CD8-positive, alpha-beta memory T cell (primary cell): ENCODE measurements at regions of chr1 and their contacts with region 1.

Region 1: GRCh38 chr1:185156854-185157598 is at the starts of genes SWT1 and TRMT1L:
- DNase-seq: peak; percentile 96 to 98 (median 97)
- H3K4me3 ChIP-seq: peak within 1 kb of the TSS; percentile 90
- H3K4me3 Mint-ChIP-seq: peak within 1 kb of the TSS; percentile 96 to 99 (median 99)
- H3K27ac ChIP-seq: peak within 1 kb of the TSS; percentile 98
- H3K27ac Mint-ChIP-seq: peak within 1 kb of the TSS; percentile 93 to 100 (median 99)
- H3K4me1 ChIP-seq: peaks cover 14% of the 10 kb centered on the region
- H3K4me1 Mint-ChIP-seq: peaks cover 41 to 48% (median 46%) of the 10 kb centered on the region in 3 donors
- H3K27me3 ChIP-seq: no peaks in the 10 kb centered on the region
- H3K27me3 Mint-ChIP-seq: no peaks in the 10 kb centered on the region
- total RNA-seq, gene SWT1: 2.3 to 2.7 TPM
- total RNA-seq, gene TRMT1L: 23.2 to 25.5 TPM

Region 2: GRCh38 chr1:184754476-184755225 is 402.4 kb before region 1 on chr1 and contains the start of gene EDEM3:
- CTCF ChIA-PET with region 1: no interaction called
- POLR2A ChIA-PET with region 1: interaction called, 10 read pairs
- DNase-seq: peak; percentile 95 to 99 (median 98)
- H3K4me3 ChIP-seq: peak within 1 kb of the TSS; percentile 86
- H3K4me3 Mint-ChIP-seq: peak within 1 kb of the TSS; percentile 92 to 97 (median 94)
- H3K27ac ChIP-seq: peak within 1 kb of the TSS; percentile 93
- H3K27ac Mint-ChIP-seq: peak within 1 kb of the TSS; percentile 82 to 98 (median 93)
- H3K4me1 ChIP-seq: peaks cover 18% of the 10 kb centered on the region
- H3K4me1 Mint-ChIP-seq: peaks cover 41 to 52% (median 51%) of the 10 kb centered on the region in 3 donors
- H3K27me3 ChIP-seq: no peaks in the 10 kb centered on the region
- H3K27me3 Mint-ChIP-seq: no peaks in the 10 kb centered on the region
- total RNA-seq, gene EDEM3: 20.1 to 24.9 TPM

Region 3: GRCh38 chr1:185144233-185144632 is 12.8 kb before region 1 on chr1:
- CTCF ChIA-PET with region 1: no interaction called
- POLR2A ChIA-PET with region 1: no interaction called
- DNase-seq: no peak
- H3K4me3 ChIP-seq: no peak overlapping the region
- H3K4me3 Mint-ChIP-seq: no peak overlapping the region
- H3K27ac ChIP-seq: no peak overlapping the region
- H3K27ac Mint-ChIP-seq: no peak overlapping the region
- H3K4me1 ChIP-seq: no peaks in the 10 kb centered on the region
- H3K4me1 Mint-ChIP-seq: peaks cover 2 to 12% (median 6%) of the 10 kb centered on the region in 3 donors
- H3K27me3 ChIP-seq: no peaks in the 10 kb centered on the region
- H3K27me3 Mint-ChIP-seq: no peaks in the 10 kb centered on the region

Region 4: GRCh38 chr1:185170291-185170848 is 13.3 kb after region 1 on chr1:
- CTCF ChIA-PET with region 1: interaction called, 17 read pairs
- POLR2A ChIA-PET with region 1: interaction called, 6 read pairs
- DNase-seq: peak in 3 of 5 donors; percentile 47 to 69 (median 52)
- H3K4me3 ChIP-seq: no peak overlapping the region
- H3K4me3 Mint-ChIP-seq: peak overlapping the region in 2 of 7 donors; percentile 44 to 60
- H3K27ac ChIP-seq: no peak overlapping the region
- H3K27ac Mint-ChIP-seq: peak overlapping the region in 5 of 8 donors; percentile 30 to 91 (median 51)
- H3K4me1 ChIP-seq: no peaks in the 10 kb centered on the region
- H3K4me1 Mint-ChIP-seq: peaks cover 4 to 5% (median 4%) of the 10 kb centered on the region in 3 donors
- H3K27me3 ChIP-seq: no peaks in the 10 kb centered on the region
- H3K27me3 Mint-ChIP-seq: no peaks in the 10 kb centered on the region